ENCODE measurements at regions of chr19 and their contacts with region 1.

Region 1: GRCh38 chr19:19063183-19064097 is at the start of gene SLC25A42:
- DNase-seq: peak; percentile 99
- H3K4me3 Mint-ChIP-seq: peak within 1 kb of the TSS; percentile 79
- H3K27ac Mint-ChIP-seq: peak within 1 kb of the TSS; percentile 72
- H3K4me1 Mint-ChIP-seq: peaks cover 31% of the 10 kb centered on the region
- H3K27me3 Mint-ChIP-seq: no peaks in the 10 kb centered on the region
- total RNA-seq, gene SLC25A42: 12.2 to 12.4 TPM

Region 2: GRCh38 chr19:19033426-19034203 is 29.8 kb before region 1 on chr19 and contains the starts of genes ARMC6 and SUGP2:
- CTCF ChIA-PET with region 1: no interaction called
- POLR2A ChIA-PET with region 1: interaction called, 5 read pairs
- intact Hi-C with region 1: loop called (anchors 1 kb)
- DNase-seq: peak; percentile 91
- H3K4me3 Mint-ChIP-seq: peak within 1 kb of the TSS; percentile 89
- H3K27ac Mint-ChIP-seq: peak within 1 kb of the TSS; percentile 84
- H3K4me1 Mint-ChIP-seq: peaks cover 30% of the 10 kb centered on the region
- H3K27me3 Mint-ChIP-seq: no peaks in the 10 kb centered on the region
- total RNA-seq, gene ARMC6: 24.4 to 26.2 TPM
- total RNA-seq, gene SUGP2: 98.1 to 102 TPM